GM10248 (cell line): ENCODE measurements at regions of chr7 and their contacts with region 1.

Region 1: GRCh38 chr7:142535123-142535779 is 214.0 kb upstream of the PRSS1 start:
- DNase-seq: peak; percentile 62
- CTCF ChIP-seq: peak; percentile 85

Region 2: GRCh38 chr7:142412551-142413193 is 122.6 kb before region 1 on chr7:
- CTCF ChIA-PET with region 1: no interaction called
- POLR2A ChIA-PET with region 1: no interaction called
- DNase-seq: peak; percentile 58
- CTCF ChIP-seq: peak; percentile 68

Region 3: GRCh38 chr7:142496545-142497041 is 38.7 kb before region 1 on chr7:
- CTCF ChIA-PET with region 1: interaction called, 11 read pairs
- POLR2A ChIA-PET with region 1: no interaction called
- DNase-seq: peak; percentile 34
- CTCF ChIP-seq: peak; percentile 73

Region 4: GRCh38 chr7:142557971-142558582 is 22.8 kb after region 1 on chr7:
- CTCF ChIA-PET with region 1: interaction called, 29 read pairs
- POLR2A ChIA-PET with region 1: no interaction called
- DNase-seq: peak; percentile 56
- CTCF ChIP-seq: peak; percentile 91

Region 5: GRCh38 chr7:142598297-142598696 is 63.0 kb after region 1 on chr7:
- CTCF ChIA-PET with region 1: interaction called, 20 read pairs
- POLR2A ChIA-PET with region 1: no interaction called
- DNase-seq: no peak
- CTCF ChIP-seq: no peak

Region 6: DNA sequence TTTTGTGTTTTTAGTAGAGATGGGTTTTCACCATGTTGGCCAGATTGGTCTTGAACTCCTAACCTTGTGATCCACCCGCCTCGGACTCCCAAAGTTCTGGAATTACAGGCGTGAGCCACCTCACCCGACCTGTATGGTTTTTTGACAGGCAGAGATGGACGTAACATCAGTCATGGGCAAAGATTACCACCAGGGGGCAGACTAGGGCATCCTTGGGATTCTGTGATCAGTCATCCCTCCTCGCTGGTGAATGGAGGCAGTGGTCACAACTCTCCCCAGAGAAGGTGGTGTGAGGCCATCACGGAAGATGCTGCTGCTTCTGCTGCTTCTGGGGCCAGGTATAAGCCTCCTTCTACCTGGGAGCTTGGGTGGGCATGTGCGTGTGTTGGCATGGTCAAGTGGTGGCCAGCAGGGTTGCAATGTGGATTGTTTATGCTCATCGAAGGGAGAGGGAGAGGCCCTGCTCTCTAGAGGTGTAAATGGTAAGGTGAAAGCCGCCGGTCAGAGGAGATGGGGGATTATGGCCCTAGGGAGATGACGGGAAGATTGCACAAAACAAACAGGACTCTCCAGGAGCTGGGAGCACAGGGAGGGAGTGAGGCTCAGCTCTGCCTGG is 91.3 kb after region 1 on chr7:
- CTCF ChIA-PET with region 1: interaction called, 17 read pairs
- POLR2A ChIA-PET with region 1: no interaction called
- DNase-seq: peak; percentile 49
- CTCF ChIP-seq: peak; percentile 61